Prostate gland (tissue), 2 donors: ENCODE measurements at regions of chr5 and their contacts with region 1.

Region 1: GRCh38 chr5:149960272-149961185 is at the start of gene SLC26A2:
- DNase-seq: peak; percentile 99
- H3K4me3 ChIP-seq: peak within 1 kb of the TSS; percentile 77
- H3K27ac ChIP-seq: peak within 1 kb of the TSS; percentile 87 to 92
- H3K4me1 ChIP-seq: no peaks in the 10 kb centered on the region
- H3K27me3 ChIP-seq: no peaks in the 10 kb centered on the region
- CTCF ChIP-seq: peak in 2 of 4 experiments; percentile 2 to 23
- POLR2A ChIP-seq: peak; percentile 92
- total RNA-seq, gene SLC26A2: 19.4 to 31.0 TPM

Region 2: DNA sequence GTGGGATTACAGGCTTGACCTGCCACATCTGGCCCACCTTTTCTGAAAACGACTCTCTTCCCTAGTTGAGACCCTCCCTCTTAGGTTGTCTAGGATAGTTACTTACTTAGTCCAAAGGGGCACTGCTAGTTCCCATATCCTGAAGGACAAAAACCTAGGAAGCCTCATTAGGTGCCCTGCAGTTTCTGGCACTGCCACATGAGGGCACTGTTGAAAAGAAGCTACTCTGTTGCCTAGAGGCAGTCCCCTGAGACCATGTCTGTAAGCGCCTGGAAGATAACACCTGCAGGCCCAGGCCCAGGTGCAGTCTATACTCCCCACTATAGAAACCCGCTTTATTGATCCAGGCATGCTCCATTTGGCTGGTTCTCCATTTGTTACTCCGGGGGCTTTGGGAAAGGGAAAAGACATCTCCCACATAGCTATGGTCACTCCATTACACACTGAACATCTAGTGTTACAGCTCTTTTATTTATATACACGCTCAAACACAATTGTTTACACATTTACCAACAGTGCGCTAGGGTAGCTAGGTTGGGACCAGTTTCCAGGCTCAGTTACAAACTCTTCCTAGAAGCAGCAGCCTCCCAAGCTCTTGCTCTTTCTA is 303.9 kb before region 1 on chr5:
- intact Hi-C with region 1: loop called (anchors 5 kb)
- DNase-seq: no peak
- H3K4me3 ChIP-seq: no peak overlapping the region
- H3K27ac ChIP-seq: no peak overlapping the region
- H3K4me1 ChIP-seq: no peaks in the 10 kb centered on the region
- H3K27me3 ChIP-seq: no peaks in the 10 kb centered on the region
- CTCF ChIP-seq: peak in 3 of 4 experiments; percentile 30 to 64 (median 53)
- POLR2A ChIP-seq: no peak

Region 3: GRCh38 chr5:149852641-149853330 is 107.7 kb before region 1 on chr5:
- intact Hi-C with region 1: loop called (anchors 5 kb)
- DNase-seq: peak; percentile 70
- H3K4me3 ChIP-seq: no peak overlapping the region
- H3K27ac ChIP-seq: no peak overlapping the region
- H3K4me1 ChIP-seq: peaks cover 5% of the 10 kb centered on the region
- H3K27me3 ChIP-seq: no peaks in the 10 kb centered on the region
- CTCF ChIP-seq: peak; percentile 52 to 83 (median 71)
- POLR2A ChIP-seq: no peak